IMR-90 (cell line): ENCODE measurements at regions of chr5 and their contacts with region 1.

Region 1: DNA sequence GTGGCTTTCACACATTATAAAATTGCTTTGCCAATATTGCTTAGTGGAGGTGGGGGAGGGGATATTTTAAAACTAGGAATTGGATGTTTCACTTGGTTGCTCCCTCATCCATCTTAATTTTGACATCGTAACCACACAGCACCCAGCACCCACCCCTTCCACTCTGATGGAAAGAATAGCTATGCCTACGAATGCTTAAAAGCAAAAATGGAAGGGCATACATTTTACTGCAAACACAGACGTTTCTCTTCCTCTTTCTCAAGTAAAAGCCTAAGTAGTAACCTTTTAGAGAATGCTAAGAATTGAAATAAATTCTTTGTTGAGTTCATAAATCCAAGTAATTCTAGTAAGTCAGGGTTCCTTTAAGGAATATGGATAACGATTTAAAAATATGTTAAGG is 69.9 kb downstream of the JAKMIP2 start:
- DNase-seq: no peak
- ATAC-seq: no peak
- H3K4me3 ChIP-seq: no peak overlapping the region
- H3K27ac ChIP-seq: no peak overlapping the region
- H3K4me1 ChIP-seq: no peaks in the 10 kb centered on the region
- H3K27me3 ChIP-seq: no peaks in the 10 kb centered on the region
- CTCF ChIP-seq: no peak
- POLR2A ChIP-seq: no peak
- RAD21 ChIP-seq: no peak

Region 2: DNA sequence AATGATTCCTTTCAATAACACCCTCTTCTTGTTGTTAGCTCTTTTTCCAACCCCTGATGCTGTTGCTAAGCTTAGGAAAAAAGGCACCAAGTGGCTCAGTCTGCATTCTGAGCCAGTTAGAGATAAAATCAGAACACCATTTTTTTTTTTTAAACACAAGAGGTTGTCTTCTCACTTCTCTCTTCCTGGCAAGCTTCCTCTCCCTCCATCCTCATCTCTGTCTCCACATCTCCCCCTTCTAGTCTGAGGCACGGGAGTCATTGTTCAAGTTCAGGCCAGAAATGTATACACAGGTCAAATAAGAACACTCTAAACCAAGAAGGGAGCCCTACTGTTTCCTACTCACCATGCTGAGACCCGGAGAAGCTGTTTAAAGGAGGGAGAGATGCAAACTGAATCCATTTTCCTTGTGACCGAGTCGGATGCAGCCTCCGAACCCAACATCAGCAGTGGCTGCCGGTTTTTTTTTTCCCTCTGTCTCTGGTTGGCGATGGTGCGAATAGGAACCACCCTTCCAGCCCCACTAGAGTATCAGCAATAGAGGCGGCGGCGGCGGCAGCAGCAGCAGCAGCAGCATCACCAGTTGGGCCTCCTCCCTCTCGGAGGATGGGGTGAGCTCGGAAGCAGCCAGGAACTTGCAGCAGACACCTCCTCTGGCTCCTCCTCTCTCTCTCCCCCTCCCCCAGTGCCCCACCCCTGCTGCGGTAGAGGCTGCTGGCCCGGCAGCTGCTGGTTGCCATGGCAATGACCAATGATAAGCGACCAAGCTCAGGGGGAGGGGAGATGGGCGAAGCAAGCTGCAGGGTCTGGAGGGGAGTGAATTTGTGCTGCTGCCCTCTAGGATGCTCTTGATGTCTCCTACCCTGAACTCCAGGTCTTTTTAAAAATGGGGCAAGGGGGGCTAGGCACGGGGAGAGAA is 69.8 kb after region 1 on chr5 and contains the start of gene JAKMIP2:
- CTCF ChIA-PET with region 1: no interaction called
- POLR2A ChIA-PET with region 1: no interaction called
- dilution Hi-C with region 1: no loop called
- in situ Hi-C with region 1: no loop called
- intact Hi-C with region 1: loop called (anchors 5 kb)
- DNase-seq: peak; percentile 1
- ATAC-seq: peak; percentile 27; the same call in 1 of the 2 replicates
- H3K4me3 ChIP-seq: no peak within 1 kb of the TSS
- H3K27ac ChIP-seq: no peak within 1 kb of the TSS
- H3K4me1 ChIP-seq: no peaks in the 10 kb centered on the region
- H3K27me3 ChIP-seq: no peaks in the 10 kb centered on the region
- CTCF ChIP-seq: no peak
- POLR2A ChIP-seq: no peak
- RAD21 ChIP-seq: no peak
- total RNA-seq, gene JAKMIP2: under 0.01 TPM in 1 of 2 replicates, not detected in the other

Region 3: GRCh38 chr5:148465381-148466235 is 753.0 kb after region 1 on chr5:
- CTCF ChIA-PET with region 1: no interaction called
- POLR2A ChIA-PET with region 1: no interaction called
- dilution Hi-C with region 1: no loop called
- in situ Hi-C with region 1: no loop called
- intact Hi-C with region 1: no loop called
- DNase-seq: no peak
- ATAC-seq: no peak
- H3K4me3 ChIP-seq: no peak overlapping the region
- H3K27ac ChIP-seq: no peak overlapping the region
- H3K4me1 ChIP-seq: peaks cover 4% of the 10 kb centered on the region; the same call in 1 of the 2 replicates
- H3K27me3 ChIP-seq: no peaks in the 10 kb centered on the region; the same call in 1 of the 2 replicates
- CTCF ChIP-seq: no peak
- POLR2A ChIP-seq: no peak
- RAD21 ChIP-seq: no peak